Sigmoid colon (tissue), 7 donors: ENCODE measurements at regions of chr22 and their contacts with region 1.

Region 1: DNA sequence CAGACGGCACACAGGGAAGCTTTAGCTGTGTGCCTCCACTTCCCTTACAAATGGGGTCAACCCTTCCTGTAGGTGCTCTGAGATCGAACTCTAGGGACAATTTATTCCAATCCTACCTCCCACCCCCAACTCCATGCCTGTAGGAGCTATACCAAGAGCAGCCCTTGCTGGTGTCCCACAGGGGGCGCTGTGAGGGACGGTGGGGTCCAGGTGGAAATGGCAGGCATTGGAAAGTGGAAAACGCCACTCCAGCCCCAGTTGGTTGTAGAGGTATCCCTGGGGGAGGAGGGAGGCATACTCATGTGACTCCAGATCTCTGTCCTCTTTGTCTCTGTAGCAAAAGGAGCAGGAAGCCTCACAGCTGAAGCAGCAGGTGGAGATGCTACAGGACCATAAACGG is 161.3 kb downstream of the MYO18B start:
- DNase-seq: no peak
- H3K4me3 ChIP-seq: no peak overlapping the region
- H3K27ac ChIP-seq: no peak overlapping the region
- H3K4me1 ChIP-seq: no peaks in the 10 kb centered on the region
- H3K27me3 ChIP-seq: peaks cover 5 to 15% (median 7%) of the 10 kb centered on the region in 3 donors
- CTCF ChIP-seq: no peak
- EP300 ChIP-seq: no peak
- POLR2A ChIP-seq: no peak

Region 2: DNA sequence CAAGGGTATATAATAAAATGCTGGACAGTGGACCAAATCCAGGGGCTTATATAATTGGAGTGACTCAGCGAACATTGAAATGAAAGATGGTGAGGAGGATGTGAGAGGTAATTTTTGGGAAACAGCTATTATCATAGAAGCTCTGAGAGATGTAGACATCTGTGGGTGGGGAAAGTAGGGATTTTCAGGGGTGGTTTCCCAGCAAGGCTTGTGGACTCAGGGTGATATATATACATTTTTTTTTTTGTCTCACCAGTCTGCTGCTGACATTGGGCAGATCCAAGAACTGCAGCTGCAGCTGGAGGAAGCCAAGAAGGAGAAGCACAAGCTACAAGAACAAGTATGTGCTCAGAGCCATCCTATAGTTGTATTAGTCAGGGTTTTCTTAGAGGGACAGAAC is 46.8 kb after region 1 on chr22:
- intact Hi-C with region 1: loop called (anchors 10 kb)
- DNase-seq: no peak
- H3K4me3 ChIP-seq: no peak overlapping the region
- H3K27ac ChIP-seq: no peak overlapping the region
- H3K4me1 ChIP-seq: no peaks in the 10 kb centered on the region
- H3K27me3 ChIP-seq: no peaks in the 10 kb centered on the region
- CTCF ChIP-seq: no peak
- EP300 ChIP-seq: no peak
- POLR2A ChIP-seq: no peak

Region 3: GRCh38 chr22:26124991-26125725 is 221.9 kb after region 1 on chr22:
- intact Hi-C with region 1: no loop called
- DNase-seq: no peak
- H3K4me3 ChIP-seq: no peak overlapping the region
- H3K27ac ChIP-seq: no peak overlapping the region
- H3K4me1 ChIP-seq: no peaks in the 10 kb centered on the region
- H3K27me3 ChIP-seq: peaks cover 0 to 9% (median 0%) of the 10 kb centered on the region in 3 donors
- CTCF ChIP-seq: no peak
- EP300 ChIP-seq: no peak
- POLR2A ChIP-seq: no peak